ENCODE measurements at regions of chr2 and their contacts with region 1.

Region 1: DNA sequence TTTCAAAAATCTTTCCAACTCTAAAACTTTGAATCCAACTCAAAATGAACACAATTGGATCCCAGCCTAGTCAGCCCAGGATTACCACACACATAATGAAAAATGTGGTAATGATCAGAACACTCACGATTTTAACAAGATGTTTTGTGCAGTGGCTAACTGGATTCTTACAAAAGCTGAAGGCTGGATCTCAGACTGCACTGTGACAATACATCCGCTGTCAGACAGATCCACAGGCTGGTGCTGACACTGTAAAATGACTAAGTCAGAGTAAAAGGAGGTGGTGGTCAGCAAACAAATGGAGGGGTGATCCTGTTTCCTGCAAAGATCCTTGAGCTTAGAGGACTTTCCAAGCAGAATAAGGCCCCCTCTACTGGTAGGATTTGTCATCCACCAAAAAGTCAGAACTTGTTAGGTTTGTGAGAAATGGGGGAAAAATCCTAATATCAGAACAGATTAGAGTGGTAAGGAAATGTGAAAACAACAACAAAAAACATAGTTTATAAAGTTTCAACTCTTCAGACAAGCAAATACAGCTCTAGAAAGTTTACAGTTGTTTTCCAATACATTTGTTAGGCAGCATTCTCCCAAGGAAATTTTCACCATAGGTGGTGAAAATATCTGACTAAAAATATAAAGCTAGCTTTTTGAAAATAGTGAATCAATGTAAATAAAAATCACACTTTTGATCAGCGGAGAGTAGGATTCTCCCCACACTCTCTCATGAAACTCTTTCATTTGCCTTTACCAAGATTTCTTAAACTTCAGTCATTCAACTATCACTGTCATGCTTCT is 211.9 kb downstream of the AGPS start:
- DNase-seq: peak; percentile 42 to 64
- H3K4me3 ChIP-seq: no peak overlapping the region
- H3K4me3 Mint-ChIP-seq: no peak overlapping the region
- H3K27ac Mint-ChIP-seq: no peak overlapping the region
- H3K4me1 ChIP-seq: peaks cover 22% of the 10 kb centered on the region
- H3K4me1 Mint-ChIP-seq: peaks cover 20% of the 10 kb centered on the region
- H3K27me3 ChIP-seq: no peaks in the 10 kb centered on the region
- H3K27me3 Mint-ChIP-seq: no peaks in the 10 kb centered on the region
- CTCF ChIP-seq: peak; percentile 68 to 76

Region 2: GRCh38 chr2:177392373-177393202 is 211.9 kb before region 1 on chr2 and contains the start of gene AGPS:
- CTCF ChIA-PET with region 1: no interaction called
- POLR2A ChIA-PET with region 1: no interaction called
- intact Hi-C with region 1: loop called (anchors 10 kb)
- DNase-seq: peak; percentile 87 to 94
- H3K4me3 ChIP-seq: peak within 1 kb of the TSS; percentile 100
- H3K4me3 Mint-ChIP-seq: peak within 1 kb of the TSS; percentile 84
- H3K27ac Mint-ChIP-seq: peak within 1 kb of the TSS; percentile 82
- H3K4me1 ChIP-seq: peaks cover 51% of the 10 kb centered on the region
- H3K4me1 Mint-ChIP-seq: peaks cover 24% of the 10 kb centered on the region
- H3K27me3 ChIP-seq: no peaks in the 10 kb centered on the region
- H3K27me3 Mint-ChIP-seq: no peaks in the 10 kb centered on the region
- CTCF ChIP-seq: no peak
- total RNA-seq, gene AGPS: 102 and 105 TPM in 2 replicates

Region 3: DNA sequence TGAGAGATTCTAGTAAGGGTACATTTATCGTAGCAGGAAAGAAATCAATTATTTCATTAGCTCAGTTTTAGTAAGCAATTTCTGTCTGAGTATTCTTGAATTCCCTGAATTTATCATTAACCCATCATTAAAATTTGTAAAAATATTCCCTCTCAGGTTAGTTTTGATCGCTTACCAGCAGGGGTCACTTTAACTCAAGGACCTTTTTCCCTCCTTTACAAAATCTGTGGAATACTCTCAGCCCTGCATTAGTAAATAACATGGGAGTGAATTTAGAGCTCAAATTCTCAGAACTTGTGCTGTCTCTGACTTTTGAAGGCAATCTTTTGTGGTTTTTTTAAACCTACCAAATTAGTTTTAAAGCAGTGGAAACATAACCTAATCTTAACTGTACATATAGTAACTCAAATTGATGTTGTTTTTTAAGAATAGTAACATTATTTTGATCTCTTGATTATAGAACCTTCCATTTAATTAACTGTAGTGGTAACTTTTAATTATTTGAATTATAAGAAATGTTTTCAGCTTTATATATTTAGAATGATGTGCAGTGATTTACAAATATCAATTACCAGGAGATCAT is 114.7 kb before region 1 on chr2:
- CTCF ChIA-PET with region 1: interaction called, 12 read pairs
- POLR2A ChIA-PET with region 1: no interaction called
- intact Hi-C with region 1: loop called (anchors 1 kb)
- DNase-seq: peak in 1 of 2 experiments; percentile 40
- H3K4me3 ChIP-seq: no peak overlapping the region
- H3K4me3 Mint-ChIP-seq: no peak overlapping the region
- H3K27ac Mint-ChIP-seq: no peak overlapping the region
- H3K4me1 ChIP-seq: 0 out of 2 replicates have a peak, but pooled peaks cover 3% of the 10 kb centered on the region
- H3K4me1 Mint-ChIP-seq: no peaks in the 10 kb centered on the region
- H3K27me3 ChIP-seq: no peaks in the 10 kb centered on the region
- H3K27me3 Mint-ChIP-seq: no peaks in the 10 kb centered on the region
- CTCF ChIP-seq: peak; percentile 60 to 69

Region 4: DNA sequence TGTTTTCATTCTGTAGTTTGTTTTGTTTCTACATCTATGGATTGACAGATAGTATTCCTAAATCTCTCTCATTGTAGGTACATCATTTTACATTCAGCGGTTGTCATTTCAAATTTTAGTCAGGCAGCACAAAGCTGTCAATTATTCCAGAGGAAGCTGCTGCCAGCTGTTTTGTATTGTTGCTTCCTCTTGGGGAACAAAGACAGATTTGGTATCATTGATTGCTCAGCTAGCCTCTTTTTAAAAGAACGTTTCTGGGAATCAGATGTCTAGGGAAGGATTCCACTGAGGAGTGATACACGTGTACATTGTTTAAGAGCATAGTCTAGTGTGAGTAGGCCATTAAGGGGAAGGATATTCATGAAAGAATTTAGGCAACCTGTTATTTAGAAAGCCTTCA is 66.1 kb before region 1 on chr2:
- CTCF ChIA-PET with region 1: no interaction called
- POLR2A ChIA-PET with region 1: no interaction called
- intact Hi-C with region 1: loop called (anchors 5 kb)
- DNase-seq: no peak
- H3K4me3 ChIP-seq: no peak overlapping the region
- H3K4me3 Mint-ChIP-seq: no peak overlapping the region
- H3K27ac Mint-ChIP-seq: no peak overlapping the region
- H3K4me1 ChIP-seq: 0 out of 2 replicates have a peak, but pooled peaks cover 12% of the 10 kb centered on the region
- H3K4me1 Mint-ChIP-seq: no peaks in the 10 kb centered on the region
- H3K27me3 ChIP-seq: no peaks in the 10 kb centered on the region
- H3K27me3 Mint-ChIP-seq: no peaks in the 10 kb centered on the region
- CTCF ChIP-seq: no peak

Region 5: GRCh38 chr2:177552422-177553175 is 51.9 kb before region 1 on chr2:
- CTCF ChIA-PET with region 1: interaction called, 3 read pairs
- POLR2A ChIA-PET with region 1: no interaction called
- intact Hi-C with region 1: loop called (anchors 2 kb)
- DNase-seq: peak; percentile 91 to 92
- H3K4me3 ChIP-seq: peak overlapping the region; percentile 76
- H3K4me3 Mint-ChIP-seq: peak overlapping the region; percentile 99
- H3K27ac Mint-ChIP-seq: peak overlapping the region; percentile 100
- H3K4me1 ChIP-seq: no peaks in the 10 kb centered on the region
- H3K4me1 Mint-ChIP-seq: no peaks in the 10 kb centered on the region
- H3K27me3 ChIP-seq: no peaks in the 10 kb centered on the region
- H3K27me3 Mint-ChIP-seq: no peaks in the 10 kb centered on the region
- CTCF ChIP-seq: no peak

Region 6: GRCh38 chr2:177579486-177580036 is 24.9 kb before region 1 on chr2:
- CTCF ChIA-PET with region 1: no interaction called
- POLR2A ChIA-PET with region 1: no interaction called
- intact Hi-C with region 1: loop called (anchors 1 kb)
- DNase-seq: peak; percentile 41 to 52
- H3K4me3 ChIP-seq: no peak overlapping the region
- H3K4me3 Mint-ChIP-seq: no peak overlapping the region
- H3K27ac Mint-ChIP-seq: no peak overlapping the region
- H3K4me1 ChIP-seq: peaks cover 10% of the 10 kb centered on the region
- H3K4me1 Mint-ChIP-seq: no peaks in the 10 kb centered on the region
- H3K27me3 ChIP-seq: no peaks in the 10 kb centered on the region
- H3K27me3 Mint-ChIP-seq: no peaks in the 10 kb centered on the region
- CTCF ChIP-seq: no peak

Region 7: DNA sequence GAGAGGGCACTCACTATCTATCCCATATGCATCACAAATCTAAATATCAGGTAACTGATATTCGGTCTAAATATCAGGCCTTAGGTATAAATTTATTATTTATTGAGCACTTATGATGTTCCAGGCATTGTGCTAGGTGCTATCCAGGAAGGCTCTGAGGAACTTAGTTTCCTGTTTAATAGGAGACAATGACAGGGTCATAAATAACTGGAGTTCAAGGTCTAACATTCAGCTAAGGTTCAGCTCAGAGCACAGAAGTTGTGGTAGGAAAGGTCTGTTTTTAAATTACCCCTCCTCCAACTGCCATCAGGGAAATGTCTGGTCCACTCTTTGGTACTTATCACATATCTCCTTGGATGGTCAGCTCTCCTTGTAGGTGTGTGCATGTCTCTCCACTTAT is 18.3 kb before region 1 on chr2:
- CTCF ChIA-PET with region 1: interaction called, 4 read pairs
- POLR2A ChIA-PET with region 1: no interaction called
- intact Hi-C with region 1: loop called (anchors 2 kb)
- DNase-seq: no peak
- H3K4me3 ChIP-seq: no peak overlapping the region
- H3K4me3 Mint-ChIP-seq: no peak overlapping the region
- H3K27ac Mint-ChIP-seq: no peak overlapping the region
- H3K4me1 ChIP-seq: no peaks in the 10 kb centered on the region
- H3K4me1 Mint-ChIP-seq: no peaks in the 10 kb centered on the region
- H3K27me3 ChIP-seq: no peaks in the 10 kb centered on the region
- H3K27me3 Mint-ChIP-seq: no peaks in the 10 kb centered on the region
- CTCF ChIP-seq: no peak